Dorsolateral prefrontal cortex (tissue), 120 donors: ENCODE measurements at regions of chr4 and their contacts with region 1.

Region 1: DNA sequence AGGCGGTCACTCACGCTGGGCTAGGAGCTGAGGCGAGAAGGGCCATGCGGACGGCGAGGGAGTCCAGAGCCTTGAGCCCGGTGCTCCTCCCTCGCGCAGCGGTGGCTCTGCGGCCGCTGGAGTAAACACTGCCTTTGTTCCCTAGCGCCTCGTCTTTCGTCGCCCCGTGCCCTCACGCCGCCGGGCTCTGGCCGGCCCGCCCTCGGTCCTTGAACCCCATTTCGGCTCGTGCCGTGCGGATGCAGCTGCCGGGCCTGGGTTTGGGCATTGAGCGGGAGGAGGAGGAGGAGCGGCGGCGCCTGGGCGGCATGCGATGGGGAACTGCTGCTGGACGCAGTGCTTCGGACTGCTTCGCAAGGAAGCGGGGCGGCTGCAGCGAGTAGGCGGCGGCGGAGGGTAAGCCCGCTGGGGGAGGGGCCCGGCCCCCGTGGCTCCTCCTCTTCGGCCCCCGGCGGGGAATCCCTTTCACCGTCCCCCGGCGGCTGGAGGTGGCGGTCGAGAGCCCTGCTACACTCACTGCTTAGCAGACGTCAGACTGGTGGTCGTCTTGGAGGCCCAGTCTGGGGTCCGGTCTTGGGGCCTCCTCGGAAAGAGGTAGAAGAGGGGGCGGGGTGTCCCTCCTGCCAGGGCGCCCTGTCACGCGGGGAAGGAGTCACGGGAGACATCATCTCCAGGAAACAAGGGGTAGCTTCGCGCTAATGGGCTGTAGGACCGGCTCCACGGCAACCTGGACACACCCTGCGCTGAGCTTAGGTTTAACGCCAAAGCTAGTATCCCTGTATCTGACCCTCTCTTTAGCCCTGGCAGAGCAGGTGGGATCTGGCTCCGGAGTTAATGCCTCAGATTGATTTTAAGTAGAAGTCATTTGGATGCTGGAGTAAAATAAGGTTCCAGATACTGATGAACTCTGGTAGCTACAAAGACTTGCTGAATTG is at the start of gene AP1AR:
- DNase-seq: peak; percentile 59 to 88 (median 76)
- H3K4me3 ChIP-seq: peak within 1 kb of the TSS; percentile 65 to 99 (median 94)
- H3K27ac ChIP-seq: peak within 1 kb of the TSS; percentile 83 to 99 (median 95)
- H3K27me3 ChIP-seq: no peaks in the 10 kb centered on the region
- CTCF ChIP-seq: peak in 26 of 56 donors; percentile 0 to 47 (median 19)
- total RNA-seq, gene AP1AR: 10.1 to 30.2 (median 21.8) TPM

Region 2: DNA sequence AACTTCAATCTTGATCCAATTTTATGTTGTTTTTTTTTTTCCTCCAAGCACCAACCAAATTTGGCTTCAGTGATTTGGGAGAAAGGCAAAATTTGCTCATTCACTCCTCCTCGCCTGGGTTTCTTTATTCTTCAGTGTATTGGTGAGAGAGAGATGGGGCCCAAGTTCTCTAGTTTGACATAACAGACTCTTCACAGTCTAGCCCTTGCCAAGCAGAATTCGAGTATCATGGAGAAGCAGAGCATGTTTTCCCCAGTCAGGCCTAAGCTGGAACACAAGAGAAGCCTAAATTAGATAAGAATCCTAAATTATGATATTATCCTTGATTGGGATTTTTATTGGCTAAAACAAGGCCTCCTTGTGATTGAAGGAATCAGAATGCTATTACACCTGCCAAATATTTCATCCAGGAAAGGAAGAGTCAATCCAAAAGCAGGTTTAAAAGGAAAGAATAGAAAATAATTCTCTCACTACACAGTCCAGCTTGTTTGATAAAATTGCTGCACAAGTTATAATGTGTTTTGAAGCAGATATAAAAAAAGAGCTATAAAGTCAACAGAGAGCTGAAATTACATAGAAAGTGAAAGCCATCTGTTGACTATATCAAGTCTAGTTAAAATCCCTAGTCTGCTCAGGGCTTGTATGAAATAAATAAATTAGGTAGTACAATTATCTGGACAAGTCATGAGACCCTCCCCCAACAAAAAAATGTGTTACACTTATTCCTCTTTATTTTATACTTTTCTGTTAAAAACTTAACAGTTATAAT is 126.7 kb before region 1 on chr4:
- intact Hi-C with region 1: no loop called
- DNase-seq: no peak
- H3K4me3 ChIP-seq: no peak overlapping the region
- H3K27ac ChIP-seq: no peak overlapping the region
- H3K27me3 ChIP-seq: no peaks in the 10 kb centered on the region
- CTCF ChIP-seq: no peak

Region 3: GRCh38 chr4:112284662-112285411 is 52.8 kb after region 1 on chr4:
- intact Hi-C with region 1: loop called in 1 of 2 experiments (anchors 2 kb)
- DNase-seq: no peak
- H3K4me3 ChIP-seq: peak overlapping the region; percentile 53 to 92 (median 78)
- H3K27ac ChIP-seq: peak overlapping the region in 46 of 59 donors; percentile 11 to 87 (median 68)
- H3K27me3 ChIP-seq: no peaks in the 10 kb centered on the region
- CTCF ChIP-seq: no peak